Calu3 (cell line): ENCODE measurements at regions of chr1 and their contacts with region 1.

Region 1: DNA sequence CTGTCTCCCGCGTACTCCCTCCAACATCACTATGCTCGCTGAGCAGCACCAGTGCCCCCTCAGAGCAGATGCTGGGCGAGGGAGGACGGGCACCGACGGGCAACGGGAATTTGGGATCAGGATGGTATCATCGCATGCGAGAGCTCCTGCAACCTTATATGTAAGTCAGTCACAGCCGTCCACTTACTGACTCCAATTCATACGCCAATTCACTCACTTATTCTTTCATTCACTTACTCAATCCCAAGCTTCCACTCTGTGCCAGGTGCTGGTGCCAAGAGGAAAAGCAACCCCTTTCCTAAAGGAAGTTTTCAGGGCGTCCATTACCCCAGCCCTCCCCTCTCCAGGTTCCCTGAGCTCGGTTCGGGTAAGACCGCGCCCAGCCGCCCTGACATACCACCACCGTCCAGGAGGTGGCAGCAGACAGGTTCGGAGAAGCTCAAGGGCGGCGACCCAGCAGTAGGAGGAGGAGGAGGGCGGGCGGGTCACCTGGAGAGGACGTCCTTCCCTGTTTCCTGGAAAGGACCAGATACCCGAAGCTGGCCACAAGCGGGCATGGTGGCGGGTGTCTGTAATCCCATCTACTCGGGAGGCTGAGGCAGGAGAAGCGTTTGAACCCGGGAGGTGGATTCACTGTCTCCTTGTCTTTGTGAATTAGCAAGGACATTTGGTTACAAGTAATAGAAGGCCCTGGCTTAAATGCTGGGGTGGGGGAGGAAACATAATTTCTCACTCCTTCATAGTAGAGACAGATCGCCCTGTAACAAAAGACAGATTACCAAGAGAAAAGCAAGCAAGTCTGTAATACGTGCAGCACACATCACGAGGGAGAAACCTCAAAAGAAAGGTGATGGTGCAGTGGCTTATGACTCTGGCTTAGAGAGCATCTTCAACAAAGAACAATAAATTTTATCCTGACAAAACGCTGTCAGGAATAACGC is 7.6 kb upstream of the IL22RA1 start:
- DNase-seq: peak; percentile 92
- H3K4me3 Mint-ChIP-seq: peak overlapping the region; percentile 66
- H3K27ac Mint-ChIP-seq: peak overlapping the region; percentile 48
- H3K4me1 Mint-ChIP-seq: peaks cover 20% of the 10 kb centered on the region
- H3K27me3 Mint-ChIP-seq: no peaks in the 10 kb centered on the region
- CTCF ChIP-seq: peak; percentile 79

Region 2: DNA sequence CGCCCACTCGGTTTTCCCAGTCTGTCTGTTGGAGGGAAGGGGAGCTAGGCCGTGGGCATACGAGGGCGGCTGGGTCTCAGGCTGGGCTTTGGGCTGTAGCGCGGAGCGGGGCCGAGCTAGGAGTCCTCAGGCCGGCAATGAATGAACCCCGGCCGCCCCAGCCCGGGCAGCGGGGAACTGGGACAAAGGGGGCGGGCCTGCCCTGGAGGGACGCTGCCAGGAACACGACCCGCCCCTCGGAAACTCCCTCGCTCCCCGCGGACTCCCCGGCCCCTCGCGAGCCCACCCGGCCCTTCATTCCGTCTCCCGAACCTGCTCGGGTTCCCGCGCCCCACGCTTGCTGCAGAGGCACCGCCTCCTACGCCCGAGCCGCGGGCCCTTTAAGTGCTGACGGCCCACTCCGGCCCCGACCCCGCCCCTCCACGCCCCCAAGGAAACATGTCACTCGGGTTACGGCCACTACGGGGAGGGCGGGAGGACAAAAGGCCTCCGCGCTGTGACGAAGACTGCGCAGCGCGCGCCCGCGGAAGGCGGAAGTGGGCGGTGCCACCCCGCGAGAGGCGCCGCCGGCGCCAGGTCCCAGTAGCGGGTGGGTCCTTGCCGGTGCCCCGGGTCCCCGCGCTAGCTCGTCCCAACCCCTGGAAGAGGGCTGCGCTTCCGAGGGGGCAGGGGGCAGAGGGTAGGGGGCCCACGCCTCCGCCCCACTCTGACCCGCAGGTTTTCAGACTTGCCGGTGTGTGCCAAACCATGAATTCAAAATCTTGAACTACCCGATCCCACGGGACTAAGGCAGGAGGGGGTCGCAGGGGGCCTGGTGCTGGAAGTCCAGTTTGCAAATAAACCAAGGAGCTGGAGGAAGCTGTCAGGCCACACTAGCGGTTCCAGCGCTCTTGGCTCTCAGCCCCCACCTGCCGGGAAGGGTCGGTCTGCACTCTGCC is 349.8 kb before region 1 on chr1 and contains the start of gene GALE:
- CTCF ChIA-PET with region 1: no interaction called
- intact Hi-C with region 1: loop called (anchors 10 kb)
- DNase-seq: peak; percentile 90
- H3K4me3 Mint-ChIP-seq: peak within 1 kb of the TSS; percentile 83
- H3K27ac Mint-ChIP-seq: peak within 1 kb of the TSS; percentile 93
- H3K4me1 Mint-ChIP-seq: no peaks in the 10 kb centered on the region
- H3K27me3 Mint-ChIP-seq: no peaks in the 10 kb centered on the region
- CTCF ChIP-seq: no peak
- total RNA-seq, gene GALE: 76.7 and 97.9 TPM in 2 replicates

Region 3: DNA sequence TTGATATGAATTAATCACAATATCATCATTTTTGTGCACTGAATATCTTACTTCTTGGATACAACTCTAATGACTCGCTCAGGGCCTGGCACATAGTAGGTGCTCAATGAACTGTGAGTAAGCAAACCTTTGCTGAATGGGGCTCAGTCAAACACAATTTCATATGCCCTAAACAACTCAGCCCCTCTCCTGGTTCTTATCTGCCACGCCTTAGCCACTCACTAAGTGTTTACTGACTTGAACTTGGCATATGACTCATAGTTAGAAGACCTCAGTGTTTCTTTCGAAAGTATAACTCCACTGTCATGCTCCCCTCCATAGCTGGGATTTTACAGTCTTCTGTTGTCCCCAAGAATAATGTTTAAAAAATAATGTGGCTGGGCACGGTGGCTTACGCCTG is 41.4 kb after region 1 on chr1:
- CTCF ChIA-PET with region 1: interaction called, 5 read pairs
- intact Hi-C with region 1: loop called (anchors 5 kb)
- DNase-seq: peak; percentile 24
- H3K4me3 Mint-ChIP-seq: no peak overlapping the region
- H3K27ac Mint-ChIP-seq: peak overlapping the region; percentile 71
- H3K4me1 Mint-ChIP-seq: peaks cover 39% of the 10 kb centered on the region
- H3K27me3 Mint-ChIP-seq: no peaks in the 10 kb centered on the region
- CTCF ChIP-seq: no peak

Region 4: GRCh38 chr1:24391882-24392603 is 241.5 kb after region 1 on chr1:
- CTCF ChIA-PET with region 1: interaction called, 15 read pairs
- intact Hi-C with region 1: no loop called
- DNase-seq: peak; percentile 63
- H3K4me3 Mint-ChIP-seq: no peak overlapping the region
- H3K27ac Mint-ChIP-seq: peak overlapping the region; percentile 54
- H3K4me1 Mint-ChIP-seq: peaks cover 45% of the 10 kb centered on the region
- H3K27me3 Mint-ChIP-seq: no peaks in the 10 kb centered on the region
- CTCF ChIP-seq: peak; percentile 52